Activated CD4-positive, alpha-beta T cell treated with anti-CD3 and anti-CD28 coated beads for 36 hours (primary cell): ENCODE measurements at regions of chr17 and their contacts with region 1.

Region 1: DNA sequence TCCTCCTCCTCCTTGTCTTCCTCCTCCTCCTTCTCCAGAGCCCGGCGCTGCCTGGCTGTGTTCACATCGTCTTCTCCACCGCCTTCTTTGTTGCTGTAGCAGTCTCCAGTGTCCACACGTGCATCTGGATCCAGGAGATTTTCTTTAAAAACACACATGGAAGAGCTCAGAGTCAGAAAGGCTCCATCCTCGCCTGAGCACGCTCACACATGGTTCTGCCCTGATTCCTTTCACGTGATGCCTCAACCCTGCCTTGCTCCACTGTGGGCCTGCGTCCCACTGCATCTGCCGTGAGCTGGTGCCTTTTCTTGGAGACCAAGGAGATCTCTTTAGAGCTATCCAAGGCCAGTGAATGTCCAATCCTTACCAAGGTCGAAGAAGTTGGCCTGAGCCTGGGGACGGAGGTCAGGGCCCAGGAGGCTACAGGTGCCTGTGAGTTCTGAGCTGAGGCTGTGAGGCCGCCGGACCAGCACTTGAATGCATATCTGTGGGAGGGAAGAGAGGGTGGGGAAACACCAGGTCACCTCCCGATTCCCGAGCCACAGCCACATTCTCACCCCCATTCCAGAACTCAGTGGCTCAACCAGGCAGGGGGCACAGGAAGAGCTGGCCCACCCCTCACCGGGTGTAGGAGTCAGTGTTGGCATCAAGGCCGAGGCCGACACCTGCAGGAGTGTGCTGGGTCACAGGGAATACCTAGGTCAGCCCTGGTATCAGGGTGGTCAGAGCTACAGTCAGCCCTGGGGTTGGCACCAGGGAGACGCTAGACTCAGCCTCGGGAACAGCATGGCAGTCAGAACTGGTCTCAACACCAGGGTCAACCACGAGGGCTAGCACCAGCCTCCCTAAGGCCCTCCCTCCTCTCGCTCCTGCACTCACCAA is 37.6 kb downstream of the HASPIN start:
- DNase-seq: no peak
- ATAC-seq: no peak
- H3K4me3 Mint-ChIP-seq: no peak overlapping the region
- H3K27ac Mint-ChIP-seq: no peak overlapping the region
- H3K4me1 Mint-ChIP-seq: peaks cover 33% of the 10 kb centered on the region
- H3K27me3 Mint-ChIP-seq: no peaks in the 10 kb centered on the region

Region 2: GRCh38 chr17:3750926-3751325 is 10.4 kb before region 1 on chr17:
- CTCF ChIA-PET with region 1: no interaction called
- POLR2A ChIA-PET with region 1: no interaction called
- intact Hi-C with region 1: no loop called
- DNase-seq: peak; percentile 65
- ATAC-seq: peak; percentile 59
- H3K4me3 Mint-ChIP-seq: no peak overlapping the region
- H3K27ac Mint-ChIP-seq: peak overlapping the region; percentile 81
- H3K4me1 Mint-ChIP-seq: peaks cover 29% of the 10 kb centered on the region
- H3K27me3 Mint-ChIP-seq: no peaks in the 10 kb centered on the region

Region 3: GRCh38 chr17:3796110-3796821 is 35.0 kb after region 1 on chr17:
- CTCF ChIA-PET with region 1: interaction called, 3 read pairs
- POLR2A ChIA-PET with region 1: no interaction called
- intact Hi-C with region 1: loop called (anchors 1 kb)
- DNase-seq: peak; percentile 80
- ATAC-seq: peak; percentile 75
- H3K4me3 Mint-ChIP-seq: no peak overlapping the region
- H3K27ac Mint-ChIP-seq: peak overlapping the region; percentile 43
- H3K4me1 Mint-ChIP-seq: peaks cover 29% of the 10 kb centered on the region
- H3K27me3 Mint-ChIP-seq: no peaks in the 10 kb centered on the region